ENCODE measurements at regions of chr14 and their contacts with region 1.

Region 1: GRCh38 chr14:95993768-95994592 is 45.2 kb upstream of the C14orf132 start:
- DNase-seq: peak in 4 of 7 donors; percentile 39 to 50 (median 44)
- H3K4me3 ChIP-seq: no peak overlapping the region
- H3K27ac ChIP-seq: no peak overlapping the region
- H3K4me1 ChIP-seq: no peaks in the 10 kb centered on the region
- H3K27me3 ChIP-seq: no peaks in the 10 kb centered on the region
- CTCF ChIP-seq: peak; percentile 75 to 86 (median 78)
- POLR2A ChIP-seq: no peak

Region 2: DNA sequence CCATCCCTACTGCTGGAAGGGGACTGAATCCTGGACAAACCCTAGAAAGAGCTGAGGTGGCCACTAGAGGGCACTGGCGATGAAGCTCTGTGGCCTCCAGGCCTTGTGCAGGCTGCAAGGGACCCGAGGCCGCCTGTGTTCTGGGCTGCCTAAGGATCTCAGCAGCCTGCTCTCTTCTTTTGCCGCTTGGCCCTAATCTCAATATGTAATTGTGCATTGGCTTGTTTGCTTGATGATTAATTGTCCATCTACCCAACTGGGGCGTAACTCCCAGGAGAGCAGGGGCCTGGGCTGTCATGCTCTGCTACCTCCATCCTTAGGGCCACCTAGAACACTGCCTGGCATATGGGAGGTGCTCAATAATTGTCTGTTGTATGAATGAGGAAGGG is 551.4 kb before region 1 on chr14:
- intact Hi-C with region 1: loop called in 1 of 2 experiments (anchors 10 kb)
- DNase-seq: peak; percentile 79 to 95 (median 88)
- H3K4me3 ChIP-seq: no peak overlapping the region
- H3K27ac ChIP-seq: no peak overlapping the region
- H3K4me1 ChIP-seq: no peaks in the 10 kb centered on the region
- H3K27me3 ChIP-seq: no peaks in the 10 kb centered on the region
- CTCF ChIP-seq: peak; percentile 71 to 91 (median 84)
- POLR2A ChIP-seq: no peak

Region 3: GRCh38 chr14:95683793-95684192 is 310.2 kb before region 1 on chr14:
- intact Hi-C with region 1: loop called in 1 of 2 experiments (anchors 10 kb)
- DNase-seq: peak in 5 of 7 donors; percentile 44 to 69 (median 52)
- H3K4me3 ChIP-seq: no peak overlapping the region
- H3K27ac ChIP-seq: no peak overlapping the region
- H3K4me1 ChIP-seq: peaks cover 0 to 8% of the 10 kb centered on the region in 2 donors
- H3K27me3 ChIP-seq: no peaks in the 10 kb centered on the region
- CTCF ChIP-seq: peak; percentile 35 to 81 (median 65)
- POLR2A ChIP-seq: no peak

Region 4: DNA sequence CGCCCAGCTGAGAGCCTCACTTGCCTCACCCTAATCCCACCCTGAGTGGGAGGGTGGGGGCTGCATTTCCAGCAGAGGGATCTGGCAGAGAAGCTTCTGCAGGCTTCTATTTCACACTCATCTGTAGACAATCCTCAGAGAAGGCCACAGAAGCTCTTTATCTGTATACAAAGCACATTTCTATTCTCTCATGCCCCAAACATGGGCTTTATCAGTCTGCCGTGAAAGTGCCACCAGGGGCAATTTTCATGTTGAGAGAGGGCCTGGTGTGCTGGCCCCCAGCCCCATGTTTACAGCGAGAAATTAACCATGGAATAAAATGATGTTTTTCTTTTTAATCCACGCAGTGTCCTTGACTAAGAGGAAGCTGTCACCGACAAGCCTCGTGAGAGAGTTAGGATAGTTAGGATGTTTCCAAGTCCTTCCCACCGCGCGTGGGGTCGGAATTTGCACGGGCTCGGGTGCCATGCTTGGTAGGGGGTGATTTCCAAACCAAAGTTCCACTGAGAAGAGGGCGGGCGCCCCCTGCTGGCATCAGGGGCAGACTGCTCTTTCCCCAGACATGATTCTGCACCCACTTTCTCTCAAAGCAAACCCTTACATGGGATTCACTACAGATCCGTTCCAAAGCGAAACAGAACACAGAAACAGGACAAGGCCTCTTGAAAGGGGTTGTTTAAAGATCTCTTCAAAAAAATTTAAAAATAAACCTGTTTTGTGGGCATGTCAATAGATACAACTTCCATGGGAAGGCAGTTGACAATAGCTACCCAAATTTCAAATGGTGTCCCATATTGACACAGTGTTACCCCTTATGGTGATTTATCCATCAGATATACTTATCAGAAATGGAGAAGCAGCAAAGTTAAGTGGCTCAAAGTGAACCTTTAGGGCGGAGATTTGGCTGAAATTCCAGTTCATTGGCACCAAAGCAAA is 281.5 kb after region 1 on chr14:
- intact Hi-C with region 1: loop called in 1 of 2 experiments (anchors 5 kb)
- DNase-seq: peak; percentile 55 to 85 (median 72)
- H3K4me3 ChIP-seq: no peak overlapping the region
- H3K27ac ChIP-seq: no peak overlapping the region
- H3K4me1 ChIP-seq: peaks cover 0 to 10% of the 10 kb centered on the region in 2 donors
- H3K27me3 ChIP-seq: no peaks in the 10 kb centered on the region
- CTCF ChIP-seq: peak; percentile 75 to 91 (median 84)
- POLR2A ChIP-seq: no peak

Measured in adrenal gland (tissue), 19 donors.